Dorsolateral prefrontal cortex (tissue), 120 donors: ENCODE measurements at regions of chr10 and their contacts with region 1.

Region 1: GRCh38 chr10:6088721-6089390 is at the start of gene RBM17:
- DNase-seq: peak; percentile 76 to 96 (median 92)
- H3K4me3 ChIP-seq: peak within 1 kb of the TSS; percentile 71 to 100 (median 91)
- H3K27ac ChIP-seq: peak within 1 kb of the TSS in 55 of 59 donors; percentile 22 to 96 (median 79)
- H3K27me3 ChIP-seq: no peaks in the 10 kb centered on the region
- CTCF ChIP-seq: peak; percentile 93 to 100 (median 100)
- total RNA-seq, gene RBM17: 67.3 to 155 (median 95.4) TPM

Region 2: GRCh38 chr10:5948999-5949759 is 139.7 kb before region 1 on chr10:
- intact Hi-C with region 1: loop called in 1 of 2 experiments (anchors 2 kb)
- DNase-seq: peak in 9 of 10 donors; percentile 17 to 84 (median 74)
- H3K4me3 ChIP-seq: no peak overlapping the region
- H3K27ac ChIP-seq: no peak overlapping the region
- H3K27me3 ChIP-seq: no peaks in the 10 kb centered on the region
- CTCF ChIP-seq: peak in 54 of 56 donors; percentile 32 to 73 (median 56)

Region 3: GRCh38 chr10:6014241-6014761 is 74.6 kb before region 1 on chr10:
- intact Hi-C with region 1: loop called (anchors 1 kb)
- DNase-seq: peak in 3 of 10 donors; percentile 11 to 68 (median 50)
- H3K4me3 ChIP-seq: peak overlapping the region in 1 of 59 donors; percentile 5
- H3K27ac ChIP-seq: peak overlapping the region in 1 of 59 donors; percentile 18
- H3K27me3 ChIP-seq: no peaks in the 10 kb centered on the region
- CTCF ChIP-seq: peak; percentile 64 to 87 (median 77)